ENCODE measurements at regions of chr3 and their contacts with region 1.

Region 1: DNA sequence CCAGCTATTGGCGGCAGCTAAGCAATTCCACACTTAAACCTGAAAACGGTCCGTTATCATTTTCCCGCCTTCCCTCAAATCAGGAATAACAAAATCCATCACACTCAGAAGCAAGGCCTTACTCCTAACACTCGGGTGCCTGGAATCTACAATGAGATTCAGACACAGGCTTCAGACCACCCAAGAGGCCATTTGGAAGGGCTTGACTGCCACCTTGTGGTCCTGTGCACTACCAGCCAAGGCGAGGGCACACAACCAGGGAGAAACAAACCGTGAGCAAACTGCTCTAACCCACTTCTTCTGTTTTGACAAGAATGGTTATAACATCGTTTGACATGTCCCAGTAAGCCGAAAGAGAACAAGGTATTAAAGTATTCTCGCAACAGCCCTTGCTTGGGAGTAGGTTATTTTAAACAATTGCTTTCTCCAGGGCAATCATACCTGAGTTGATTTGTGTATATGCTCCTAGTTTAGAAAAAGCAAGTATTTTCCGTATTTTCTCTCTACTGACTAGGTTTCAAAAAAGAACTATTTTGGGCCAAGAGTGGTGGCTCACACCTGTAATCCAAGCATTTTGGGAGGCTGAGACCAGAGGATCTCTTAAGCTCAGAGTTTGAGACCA is 40.1 kb upstream of the TAFA4 start:
- DNase-seq: peak; percentile 53 to 85
- H3K4me3 ChIP-seq: no peak overlapping the region
- H3K27ac ChIP-seq: no peak overlapping the region
- H3K4me1 ChIP-seq: peaks cover 0 to 2% (median 0%) of the 10 kb centered on the region in 4 experiments; a peak in 1 of 7 replicates
- H3K27me3 ChIP-seq: no peaks in the 10 kb centered on the region
- CTCF ChIP-seq: peak; percentile 90 to 99 (median 91)
- EP300 ChIP-seq: no peak
- POLR2A ChIP-seq: no peak
- RAD21 ChIP-seq: peak; percentile 99

Region 2: GRCh38 chr3:68904064-68904463 is 68.4 kb before region 1 on chr3:
- CTCF ChIA-PET with region 1: interaction called, 10 read pairs
- POLR2A ChIA-PET with region 1: no interaction called
- DNase-seq: no peak
- H3K4me3 ChIP-seq: no peak overlapping the region
- H3K27ac ChIP-seq: no peak overlapping the region
- H3K4me1 ChIP-seq: peaks cover 0 to 5% (median 2%) of the 10 kb centered on the region in 4 experiments; a peak in 2 of 7 replicates
- H3K27me3 ChIP-seq: no peaks in the 10 kb centered on the region
- CTCF ChIP-seq: no peak
- EP300 ChIP-seq: no peak
- POLR2A ChIP-seq: no peak
- RAD21 ChIP-seq: no peak

Region 3: DNA sequence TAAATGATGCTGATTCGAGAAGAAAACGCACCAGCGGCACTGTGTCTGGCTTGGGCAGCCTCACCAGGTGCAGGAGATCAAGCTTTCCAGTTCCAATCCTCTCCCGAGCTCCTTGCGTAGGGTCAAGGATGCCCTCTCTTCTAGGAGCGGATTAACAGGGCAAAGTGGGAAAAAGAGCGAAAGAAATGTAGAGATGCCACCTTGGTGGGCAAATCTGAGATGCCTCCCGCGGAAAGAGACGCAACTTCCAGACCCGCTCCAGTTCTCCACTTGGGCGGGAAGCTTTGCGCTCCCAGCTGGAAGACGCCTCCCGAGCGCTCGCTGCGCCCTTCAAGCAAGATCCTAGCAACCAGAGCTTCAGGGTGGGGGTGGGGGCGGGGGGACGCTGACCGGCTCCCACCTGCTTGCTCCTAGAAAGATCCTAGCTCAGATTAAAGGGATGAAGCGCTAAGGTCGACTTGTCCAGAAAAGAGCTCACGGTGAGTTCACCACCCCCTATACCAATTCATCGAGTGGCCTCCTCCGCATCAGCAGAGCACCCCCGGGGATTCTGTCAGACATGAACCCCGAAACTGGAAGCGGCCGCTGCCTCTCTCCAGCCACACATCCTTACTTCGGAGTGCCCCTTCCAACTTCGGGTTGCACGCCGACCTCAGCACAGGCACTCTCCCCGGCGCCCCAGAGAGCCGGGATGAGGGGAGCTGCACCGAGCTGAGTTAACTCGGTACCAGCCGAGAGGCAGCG is 40.9 kb before region 1 on chr3:
- CTCF ChIA-PET with region 1: interaction called, 14 read pairs
- POLR2A ChIA-PET with region 1: interaction called, 3 read pairs
- DNase-seq: peak in 1 of 2 experiments; percentile 69
- H3K4me3 ChIP-seq: peak overlapping the region; percentile 56 to 86 (median 64)
- H3K27ac ChIP-seq: no peak overlapping the region
- H3K4me1 ChIP-seq: peaks cover 0 to 4% (median 3%) of the 10 kb centered on the region in 4 experiments; a peak in 2 of 7 replicates
- H3K27me3 ChIP-seq: peaks cover 18 to 25% (median 19%) of the 10 kb centered on the region in 4 experiments; a peak in 6 of 7 replicates
- CTCF ChIP-seq: no peak
- EP300 ChIP-seq: no peak
- POLR2A ChIP-seq: no peak
- RAD21 ChIP-seq: no peak

Region 4: GRCh38 chr3:68957895-68958294 is 14.6 kb before region 1 on chr3:
- CTCF ChIA-PET with region 1: interaction called, 15 read pairs
- POLR2A ChIA-PET with region 1: no interaction called
- DNase-seq: no peak
- H3K4me3 ChIP-seq: no peak overlapping the region
- H3K27ac ChIP-seq: no peak overlapping the region
- H3K4me1 ChIP-seq: peaks cover 0 to 4% (median 1%) of the 10 kb centered on the region in 4 experiments; a peak in 3 of 7 replicates
- H3K27me3 ChIP-seq: no peaks in the 10 kb centered on the region
- CTCF ChIP-seq: no peak
- EP300 ChIP-seq: no peak
- POLR2A ChIP-seq: no peak
- RAD21 ChIP-seq: no peak

Region 5: DNA sequence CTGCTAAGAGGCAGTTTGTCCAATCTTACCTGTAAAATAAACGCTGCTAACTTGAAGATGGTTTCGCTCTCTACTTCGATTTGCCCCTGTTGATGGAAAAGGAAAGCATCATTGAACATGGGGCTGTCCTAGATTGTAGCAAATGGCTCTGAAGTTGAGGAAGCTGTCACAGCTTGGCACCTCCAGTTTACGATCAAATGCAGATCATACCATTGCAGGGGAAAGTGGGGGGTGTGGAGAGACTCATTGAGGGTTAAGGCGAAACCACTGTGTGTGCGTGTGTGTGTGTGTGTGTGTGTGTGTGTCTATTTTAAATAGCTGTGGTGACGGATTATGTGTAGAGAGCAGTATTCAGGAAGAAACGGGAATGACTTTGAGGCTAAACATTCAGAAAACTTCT is 277.5 kb after region 1 on chr3:
- CTCF ChIA-PET with region 1: no interaction called
- POLR2A ChIA-PET with region 1: no interaction called
- DNase-seq: peak in 1 of 2 experiments; percentile 57
- H3K4me3 ChIP-seq: no peak overlapping the region
- H3K27ac ChIP-seq: no peak overlapping the region
- H3K4me1 ChIP-seq: peaks cover 0 to 8% (median 0%) of the 10 kb centered on the region in 4 experiments; a peak in 2 of 7 replicates
- H3K27me3 ChIP-seq: peaks cover 5 to 24% (median 23%) of the 10 kb centered on the region in 4 experiments
- CTCF ChIP-seq: no peak
- EP300 ChIP-seq: peak in 1 of 2 experiments; percentile 99; a peak in 2 of 3 replicates
- POLR2A ChIP-seq: no peak
- RAD21 ChIP-seq: 0 out of 4 replicates have a peak, but pooled peaks of 1 of the 2 experiments have one; percentile 3